Posterior vena cava (tissue), 2 donors: ENCODE measurements at regions of chr5 and their contacts with region 1.

Region 1: DNA sequence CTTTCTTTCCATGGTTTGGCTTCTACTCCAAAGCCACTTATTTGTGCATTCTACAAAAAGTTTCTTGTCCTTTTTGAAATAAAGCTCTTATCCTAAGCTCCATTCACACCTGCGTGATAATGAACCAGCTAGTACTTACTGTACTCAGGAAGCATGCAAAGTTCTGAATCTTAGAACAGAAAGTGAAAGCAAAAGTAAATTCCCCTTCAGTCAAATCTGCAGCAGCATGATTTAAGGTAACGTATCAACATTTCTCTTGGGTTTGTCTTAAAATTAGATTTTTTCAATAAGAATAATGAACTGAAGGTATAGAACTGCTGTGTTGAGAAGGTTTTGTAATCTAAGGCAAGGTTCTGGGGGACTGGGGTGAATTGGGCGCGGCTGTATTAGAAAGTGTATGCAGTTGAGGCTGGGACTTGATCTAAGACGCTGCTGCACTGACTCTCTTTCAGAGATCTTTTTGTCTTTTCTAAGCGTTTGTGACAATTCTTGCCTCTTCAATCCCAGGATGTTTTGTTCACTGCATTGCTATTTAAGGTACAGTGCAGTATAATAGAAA is at the start of gene ERAP2:
- DNase-seq: no peak
- total RNA-seq, gene ERAP2: 4.8 to 9.6 TPM

Region 2: GRCh38 chr5:96919754-96920197 is 43.4 kb after region 1 on chr5:
- intact Hi-C with region 1: loop called in 1 of 2 experiments (anchors 10 kb)
- DNase-seq: no peak

Region 3: DNA sequence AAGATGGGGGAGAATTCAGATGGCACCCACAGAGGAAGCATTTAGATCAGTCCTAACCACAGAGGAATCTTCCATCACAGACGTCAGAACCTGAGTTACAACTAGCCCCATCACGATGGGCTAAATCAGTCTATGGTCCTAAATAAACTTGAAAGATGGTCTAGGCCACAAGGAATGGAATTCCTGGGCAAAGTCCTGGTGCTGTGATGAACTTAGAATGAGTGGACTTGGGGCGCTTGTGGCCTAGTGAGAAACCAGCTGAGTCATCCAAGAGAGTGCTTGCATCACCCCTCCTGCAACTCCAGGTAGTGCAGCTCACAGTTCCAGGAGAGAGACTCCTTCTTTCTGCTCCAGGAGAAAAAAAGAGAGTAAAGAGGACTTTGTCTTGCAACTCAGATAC is 1174.2 kb after region 1 on chr5:
- intact Hi-C with region 1: loop called in 1 of 2 experiments (anchors 5 kb)
- DNase-seq: no peak